ENCODE measurements at regions of chr10 and their contacts with region 1.

Region 1: DNA sequence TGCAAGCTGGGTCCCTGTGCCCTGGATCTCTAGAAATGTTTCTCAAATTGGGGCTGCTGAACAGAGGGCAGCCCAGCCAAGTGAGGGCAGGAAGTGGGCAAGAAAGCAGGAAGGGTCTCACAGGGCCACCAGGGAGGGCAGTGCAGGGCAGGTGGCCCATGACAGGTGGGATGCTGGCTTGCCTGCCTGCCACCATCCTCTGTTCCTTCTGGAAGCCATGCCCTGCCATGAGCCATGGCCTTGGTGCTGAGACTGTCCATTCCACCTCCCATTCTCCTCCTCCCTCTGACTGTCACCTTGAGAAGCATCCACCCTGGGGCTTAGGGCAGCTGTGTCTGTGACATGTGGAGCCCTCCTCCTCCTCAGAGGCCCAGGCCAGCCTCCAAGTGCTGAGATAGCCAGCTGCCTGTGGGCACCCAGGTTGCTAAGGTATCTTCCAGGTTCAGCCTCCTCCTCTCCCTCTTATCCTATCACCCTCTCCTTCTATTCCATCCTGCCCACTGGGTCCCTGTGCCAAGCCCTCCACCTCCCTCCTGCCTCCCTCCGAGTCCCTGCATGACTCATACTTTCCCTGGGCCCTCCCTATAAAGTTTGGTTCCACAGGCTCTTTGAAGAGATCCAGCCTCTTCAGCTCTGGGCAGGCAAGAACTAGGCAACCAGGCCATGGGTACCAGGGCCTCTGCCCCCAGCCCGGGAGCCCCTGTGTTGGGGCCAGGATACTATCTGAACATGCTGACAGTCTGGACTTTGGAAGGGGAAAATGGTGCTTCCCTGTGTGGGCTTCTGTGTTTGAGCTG is 1.3 kb downstream of the VSIR start:
- DNase-seq: peak in 1 of 10 donors; percentile 47
- ATAC-seq: no peak
- H3K4me3 Mint-ChIP-seq: peak overlapping the region; percentile 82 to 99 (median 94)
- H3K27ac Mint-ChIP-seq: peak overlapping the region; percentile 80 to 98 (median 94)
- H3K4me1 Mint-ChIP-seq: peaks cover 34 to 90% (median 72%) of the 10 kb centered on the region in 4 donors
- H3K27me3 Mint-ChIP-seq: no peaks in the 10 kb centered on the region

Region 2: DNA sequence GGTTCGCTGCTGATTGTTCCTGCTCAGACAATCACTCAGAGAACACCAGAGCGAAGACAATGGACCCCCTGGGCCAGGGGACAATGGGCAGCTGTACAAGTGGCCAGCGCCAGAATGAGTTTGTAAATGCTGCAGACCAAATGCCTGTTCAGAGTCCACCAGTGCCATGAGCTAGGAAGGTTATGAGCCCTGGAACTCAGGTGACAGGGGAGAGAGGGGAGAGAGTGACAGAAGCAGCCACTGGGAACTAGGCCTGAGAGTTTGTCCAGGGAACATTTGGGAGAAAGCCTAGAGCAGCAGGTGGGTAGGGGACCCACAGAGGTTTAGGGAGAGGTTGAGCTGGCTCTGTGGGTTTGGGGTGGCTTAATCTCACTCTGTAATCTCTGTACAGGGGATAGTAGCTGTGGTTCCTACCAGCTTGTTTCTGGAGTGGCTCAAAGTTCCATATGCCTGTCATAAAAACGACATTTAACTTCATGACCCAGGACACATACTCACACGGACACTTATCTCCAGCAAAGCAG is 112.8 kb before region 1 on chr10:
- POLR2A ChIA-PET with region 1: no interaction called
- DNase-seq: no peak
- ATAC-seq: no peak
- H3K4me3 Mint-ChIP-seq: no peak overlapping the region
- H3K27ac Mint-ChIP-seq: peak overlapping the region in 1 of 10 donors; percentile 46
- H3K4me1 Mint-ChIP-seq: peaks cover 0 to 2% (median under 1%) of the 10 kb centered on the region in 4 donors
- H3K27me3 Mint-ChIP-seq: peaks cover 0 to 3% (median 0%) of the 10 kb centered on the region in 5 donors

Region 3: DNA sequence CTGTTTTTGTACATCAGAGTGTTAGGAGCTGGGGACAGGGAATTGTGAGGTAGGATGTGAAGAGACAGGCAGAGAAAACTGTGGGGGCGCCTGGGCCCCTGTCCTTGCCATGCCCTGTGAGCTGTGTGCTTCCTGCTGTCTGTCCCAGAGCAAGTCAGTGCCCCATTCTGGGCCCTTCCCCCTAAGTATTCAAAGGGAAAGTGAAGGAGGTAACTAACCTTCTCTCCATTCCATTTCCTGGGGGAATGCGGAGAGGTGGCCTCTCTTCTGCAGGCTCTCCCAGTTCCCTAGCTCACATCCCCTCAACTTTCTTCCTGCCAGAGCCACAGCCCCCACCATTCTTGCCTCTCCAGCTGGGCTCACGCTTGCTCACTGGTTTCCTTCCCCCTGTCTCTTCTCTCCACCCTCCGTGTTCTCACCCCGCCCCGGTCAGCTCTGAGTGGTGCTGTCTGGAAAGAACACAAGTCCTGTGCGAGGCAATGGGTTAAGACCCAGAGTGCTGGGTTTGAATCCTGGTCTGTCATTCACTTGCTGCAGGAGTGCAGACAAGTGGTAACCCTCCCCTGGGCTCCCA is 11.0 kb after region 1 on chr10:
- POLR2A ChIA-PET with region 1: interaction called, 13 read pairs
- DNase-seq: no peak
- ATAC-seq: no peak
- H3K4me3 Mint-ChIP-seq: peak overlapping the region in 1 of 10 donors; percentile 11
- H3K27ac Mint-ChIP-seq: peak overlapping the region in 4 of 10 donors; percentile 21 to 74 (median 28)
- H3K4me1 Mint-ChIP-seq: peaks cover 11 to 34% (median 18%) of the 10 kb centered on the region in 4 donors
- H3K27me3 Mint-ChIP-seq: no peaks in the 10 kb centered on the region

Region 4: DNA sequence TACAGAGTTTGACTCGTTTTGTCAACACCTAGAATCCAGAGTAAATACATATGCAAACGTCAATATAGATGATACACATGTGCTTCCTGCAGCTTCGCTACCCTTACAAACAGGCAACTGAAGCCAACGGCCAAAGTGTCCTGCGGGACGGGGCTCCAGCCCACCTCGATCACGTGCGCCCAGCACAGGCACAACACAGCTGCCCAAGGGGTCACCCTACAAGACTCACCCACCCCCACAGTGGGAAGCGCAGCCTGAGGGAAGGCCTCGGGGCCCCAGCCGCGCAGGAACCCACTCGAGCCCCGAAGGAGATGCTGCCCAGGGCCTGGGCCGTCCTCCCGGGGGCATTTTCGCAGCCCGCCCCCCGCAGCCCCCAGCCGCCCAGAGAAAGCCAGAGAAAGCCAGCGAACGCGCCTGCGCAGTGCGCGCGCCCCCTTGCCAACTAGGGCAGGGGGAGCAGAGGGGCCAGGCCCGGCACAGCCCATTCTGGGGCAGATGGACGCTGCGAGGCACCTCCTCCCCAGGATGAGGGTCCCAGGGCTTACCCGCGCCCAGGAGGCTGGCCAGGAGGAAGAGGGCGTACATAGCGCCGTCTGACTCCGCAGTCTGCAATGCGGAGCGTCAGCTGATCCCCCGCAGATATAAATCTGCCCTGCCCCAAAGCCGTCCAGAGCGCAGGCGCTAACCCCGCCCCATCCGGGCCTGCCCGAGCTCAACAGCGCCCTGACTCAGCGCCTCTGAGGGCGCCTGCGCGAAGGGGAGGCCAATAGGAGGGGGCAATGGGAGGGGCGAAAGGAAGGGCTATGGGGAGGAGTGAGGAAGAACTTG is 78.8 kb after region 1 on chr10 and contains the start of gene PSAP:
- POLR2A ChIA-PET with region 1: interaction called, 15 read pairs
- DNase-seq: peak; percentile 95 to 99 (median 98)
- ATAC-seq: peak; percentile 95 to 97
- H3K4me3 Mint-ChIP-seq: peak within 1 kb of the TSS; percentile 89 to 99 (median 94)
- H3K27ac Mint-ChIP-seq: peak within 1 kb of the TSS; percentile 74 to 96 (median 94)
- H3K4me1 Mint-ChIP-seq: peaks cover 23 to 60% (median 51%) of the 10 kb centered on the region in 4 donors
- H3K27me3 Mint-ChIP-seq: no peaks in the 10 kb centered on the region
- polyA plus RNA-seq, gene PSAP: 389 to 442 (median 398) TPM

Region 5: GRCh38 chr10:71888623-71889387 is 116.8 kb after region 1 on chr10:
- POLR2A ChIA-PET with region 1: no interaction called
- DNase-seq: peak; percentile 9 to 74 (median 36)
- ATAC-seq: peak; percentile 96 to 97
- H3K4me3 Mint-ChIP-seq: peak overlapping the region; percentile 76 to 96 (median 90)
- H3K27ac Mint-ChIP-seq: peak overlapping the region in 6 of 10 donors; percentile 18 to 88 (median 75)
- H3K4me1 Mint-ChIP-seq: peaks cover 11 to 32% (median 11%) of the 10 kb centered on the region in 4 donors
- H3K27me3 Mint-ChIP-seq: peaks cover 0 to 8% (median 2%) of the 10 kb centered on the region in 5 donors